IMR-90 (cell line): ENCODE measurements at regions of chr11 and their contacts with region 1.

Region 1: GRCh38 chr11:797296-798092 is 587 bp downstream of the SLC25A22 start:
- DNase-seq: peak; percentile 84
- ATAC-seq: peak; percentile 56
- H3K4me3 ChIP-seq: peak overlapping the region; percentile 61
- H3K27ac ChIP-seq: peak overlapping the region; percentile 89
- H3K4me1 ChIP-seq: peaks cover 10% of the 10 kb centered on the region
- H3K27me3 ChIP-seq: no peaks in the 10 kb centered on the region
- CTCF ChIP-seq: no peak
- POLR2A ChIP-seq: no peak; the same call in 1 of the 2 replicates
- RAD21 ChIP-seq: no peak

Region 2: DNA sequence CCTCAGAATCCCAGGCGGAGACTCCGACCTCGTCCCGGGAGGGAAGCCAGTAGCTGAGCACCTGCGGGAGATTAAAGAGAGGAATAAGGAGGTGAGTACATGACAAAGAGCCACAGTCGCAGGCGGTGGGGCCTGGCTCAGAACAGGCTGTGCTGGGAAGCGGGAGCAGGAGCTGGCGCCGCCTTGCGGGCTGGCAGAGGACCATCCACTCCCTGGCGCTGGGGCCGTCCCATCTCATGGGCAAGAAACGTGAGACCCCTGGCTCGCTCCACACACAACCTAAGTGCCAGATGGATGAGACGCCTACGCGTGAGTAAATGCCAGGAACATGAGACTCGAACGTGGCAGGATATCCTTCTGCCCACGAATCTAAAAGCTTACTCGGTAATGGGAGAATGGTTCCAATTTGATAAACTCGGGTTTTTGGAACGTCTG is 13.9 kb before region 1 on chr11:
- CTCF ChIA-PET with region 1: interaction called, 10 read pairs
- POLR2A ChIA-PET with region 1: no interaction called
- dilution Hi-C with region 1: no loop called
- in situ Hi-C with region 1: no loop called
- intact Hi-C with region 1: no loop called
- DNase-seq: peak; percentile 96
- ATAC-seq: peak; percentile 91
- H3K4me3 ChIP-seq: no peak overlapping the region
- H3K27ac ChIP-seq: peak overlapping the region; percentile 46; the same call in 1 of the 2 replicates
- H3K4me1 ChIP-seq: peaks cover 6% of the 10 kb centered on the region
- H3K27me3 ChIP-seq: no peaks in the 10 kb centered on the region
- CTCF ChIP-seq: peak; percentile 86
- POLR2A ChIP-seq: no peak
- RAD21 ChIP-seq: peak; percentile 73

Region 3: DNA sequence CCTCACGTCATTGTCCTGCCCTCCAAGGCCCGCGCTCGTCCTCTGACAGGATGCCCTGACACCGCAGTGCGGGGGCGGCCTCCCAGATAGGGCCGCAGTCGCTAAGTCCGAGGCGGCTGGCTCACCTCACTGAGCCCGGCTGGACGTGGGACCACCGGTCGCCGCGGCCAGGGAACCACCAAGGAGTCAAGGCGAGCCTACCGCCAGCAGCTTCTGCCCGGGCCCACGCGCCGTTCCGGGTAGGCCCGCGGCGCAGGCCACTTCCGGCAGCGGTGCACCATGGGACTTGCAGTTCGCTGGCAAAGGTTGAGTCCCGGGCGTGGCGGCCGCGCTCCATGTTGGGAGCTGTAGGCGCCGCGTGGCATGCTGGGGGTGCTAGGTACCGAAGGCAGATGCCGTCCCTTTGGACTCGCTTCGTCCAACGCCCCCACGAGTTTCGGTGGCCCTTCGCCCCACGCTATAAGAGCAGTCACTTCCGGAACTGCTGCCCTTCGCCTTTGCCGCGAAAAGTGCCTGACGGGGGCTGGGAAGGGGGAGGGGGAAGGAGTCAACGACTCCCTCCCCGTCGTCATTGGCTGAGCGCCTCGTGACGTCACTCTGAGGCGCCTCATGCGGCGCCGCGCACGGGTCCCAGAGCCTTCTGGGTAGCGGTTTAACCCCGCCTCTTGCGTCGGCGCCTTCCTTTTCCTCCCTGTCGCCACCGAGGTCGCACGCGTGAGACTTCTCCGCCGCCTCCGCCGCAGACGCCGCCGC is 12.0 kb after region 1 on chr11 and contains the start of gene RPLP2:
- CTCF ChIA-PET with region 1: no interaction called
- POLR2A ChIA-PET with region 1: no interaction called
- dilution Hi-C with region 1: no loop called
- in situ Hi-C with region 1: no loop called
- intact Hi-C with region 1: loop called (anchors 1 kb)
- DNase-seq: peak; percentile 95
- ATAC-seq: peak; percentile 81
- H3K4me3 ChIP-seq: peak within 1 kb of the TSS; percentile 86
- H3K27ac ChIP-seq: peak within 1 kb of the TSS; percentile 99
- H3K4me1 ChIP-seq: peaks cover 10% of the 10 kb centered on the region
- H3K27me3 ChIP-seq: no peaks in the 10 kb centered on the region
- CTCF ChIP-seq: no peak
- POLR2A ChIP-seq: peak; percentile 97
- RAD21 ChIP-seq: no peak
- total RNA-seq, gene RPLP2: 59.9 and 95.0 TPM in 2 replicates